ENCODE measurements at regions of chr22 and their contacts with region 1.

Region 1: DNA sequence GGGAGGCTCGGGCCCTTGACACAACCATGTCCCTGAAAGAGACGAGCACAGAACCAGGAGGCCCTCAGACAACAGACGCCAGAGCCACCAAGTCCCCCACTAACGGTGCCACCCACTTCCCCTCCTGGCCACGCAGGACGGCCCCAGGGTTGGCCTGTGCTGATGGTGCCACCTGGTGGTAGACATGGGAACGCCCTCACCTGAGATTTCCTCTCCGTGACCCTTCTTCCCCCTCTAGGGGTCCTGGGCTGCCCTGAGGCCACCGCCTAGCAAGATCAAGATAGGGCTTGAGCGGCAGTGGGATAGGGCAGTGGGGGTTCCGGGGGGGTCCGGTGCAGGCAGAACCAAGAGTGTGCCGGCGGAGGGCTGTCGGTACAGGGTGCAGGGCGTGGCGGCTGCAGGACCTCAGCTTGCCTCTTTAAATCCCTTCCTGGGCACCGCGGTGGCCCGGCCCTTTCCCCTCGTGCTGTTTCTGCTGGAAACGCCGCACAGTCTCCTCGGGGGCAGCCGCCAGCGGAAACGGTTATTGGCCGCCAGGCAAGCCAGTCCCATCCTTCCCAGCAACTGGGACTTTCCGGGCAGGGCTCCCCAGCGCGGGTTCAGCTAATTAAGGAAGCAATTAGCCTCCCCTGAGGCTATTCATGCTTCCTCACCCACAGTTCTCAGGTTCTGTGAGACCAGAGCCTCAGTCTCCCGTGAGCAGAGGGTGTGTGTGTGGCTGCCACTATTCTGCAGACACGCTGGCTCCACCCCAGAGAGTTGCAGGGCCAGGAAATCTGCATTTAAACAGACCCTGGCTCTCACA is 5.5 kb upstream of the NFAM1 start:
- DNase-seq: no peak
- H3K4me3 ChIP-seq: peak overlapping the region; percentile 43 to 44
- H3K27ac ChIP-seq: peak overlapping the region; percentile 69
- H3K4me1 ChIP-seq: peaks cover 36% of the 10 kb centered on the region
- H3K27me3 ChIP-seq: no peaks in the 10 kb centered on the region
- CTCF ChIP-seq: peak; percentile 97 to 99 (median 98)
- POLR2A ChIP-seq: no peak

Region 2: GRCh38 chr22:42090596-42091454 is 346.9 kb before region 1 on chr22 and contains the start of gene NDUFA6:
- intact Hi-C with region 1: loop called (anchors 5 kb)
- DNase-seq: peak; percentile 99
- H3K4me3 ChIP-seq: peak within 1 kb of the TSS; percentile 88 to 90
- H3K27ac ChIP-seq: peak within 1 kb of the TSS; percentile 95
- H3K4me1 ChIP-seq: peaks cover 33% of the 10 kb centered on the region
- H3K27me3 ChIP-seq: no peaks in the 10 kb centered on the region
- CTCF ChIP-seq: peak; percentile 78 to 97 (median 96)
- POLR2A ChIP-seq: peak in 1 of 2 donors; percentile 73
- total RNA-seq, gene NDUFA6: 42.0 TPM

Region 3: DNA sequence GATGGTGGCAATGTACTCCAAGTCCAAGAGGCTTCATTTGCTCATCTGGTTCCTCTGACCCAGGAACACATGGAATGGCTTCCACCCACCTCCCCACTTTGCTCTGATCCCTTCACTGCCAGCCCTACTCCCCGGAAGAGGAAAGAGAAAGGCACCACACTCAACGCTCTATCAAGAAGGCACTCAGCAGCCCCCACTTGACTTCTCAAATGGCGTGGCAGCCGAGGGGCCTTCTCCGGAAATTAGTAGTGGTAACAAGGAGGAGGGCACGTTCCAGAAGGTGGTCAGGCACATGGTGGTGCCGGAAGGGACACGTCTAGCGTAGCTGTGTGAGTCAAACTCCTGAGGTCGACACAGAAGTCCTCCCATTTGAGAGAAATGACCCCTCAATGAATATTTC is 270.6 kb before region 1 on chr22:
- intact Hi-C with region 1: loop called (anchors 2 kb)
- DNase-seq: no peak
- H3K4me3 ChIP-seq: no peak overlapping the region
- H3K27ac ChIP-seq: no peak overlapping the region
- H3K4me1 ChIP-seq: peaks cover 24% of the 10 kb centered on the region
- H3K27me3 ChIP-seq: no peaks in the 10 kb centered on the region
- CTCF ChIP-seq: no peak
- POLR2A ChIP-seq: no peak

Region 4: DNA sequence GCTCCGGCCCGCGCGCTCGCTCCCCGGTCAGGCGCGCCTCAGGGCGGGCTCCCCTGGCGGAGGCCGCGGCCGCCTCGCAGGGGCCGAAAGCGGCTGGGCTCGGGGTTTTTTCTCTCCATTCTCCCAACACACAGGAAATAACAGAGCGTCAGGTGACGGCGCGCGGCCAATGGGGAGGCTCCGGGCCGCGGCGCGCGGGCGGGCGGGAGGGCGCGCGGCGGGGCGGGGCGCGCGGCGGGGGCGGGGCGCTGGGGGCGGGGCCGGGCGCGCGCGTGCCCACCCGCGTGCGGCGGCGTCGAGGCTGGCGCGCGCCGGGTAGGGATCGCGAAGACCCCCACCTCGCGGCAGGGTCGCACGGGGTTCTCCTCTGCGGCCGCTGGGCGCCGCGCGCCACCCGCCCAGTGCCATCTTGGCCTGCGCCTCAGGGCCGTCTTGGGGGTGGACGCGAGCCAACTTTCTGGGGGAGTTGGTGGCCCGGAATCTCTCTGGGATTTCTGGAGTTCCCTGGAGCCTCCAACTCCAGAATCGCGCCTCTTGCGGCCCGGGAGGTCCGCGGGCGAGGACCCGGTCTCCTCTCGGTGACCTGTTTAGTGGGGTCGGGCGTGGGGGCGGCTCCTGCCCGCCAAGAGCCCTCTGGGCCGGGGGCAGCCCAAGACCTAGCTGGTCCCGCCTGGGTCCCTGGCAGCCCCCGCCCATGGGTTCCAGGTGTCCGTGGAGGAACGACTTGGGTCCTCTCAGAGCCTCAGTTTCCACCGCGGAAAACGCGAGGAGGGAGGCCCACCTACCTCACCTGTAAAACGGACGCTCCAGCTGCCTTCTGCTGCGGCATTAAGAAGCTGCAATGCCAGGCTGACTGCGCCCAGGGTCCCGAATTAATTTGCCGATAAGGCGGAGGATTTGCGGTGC is 166.9 kb before region 1 on chr22 and contains the start of gene TCF20:
- intact Hi-C with region 1: loop called (anchors 10 kb)
- DNase-seq: peak in 1 of 2 donors; percentile 72
- H3K4me3 ChIP-seq: peak within 1 kb of the TSS; percentile 95 to 100
- H3K27ac ChIP-seq: peak within 1 kb of the TSS; percentile 95
- H3K4me1 ChIP-seq: peaks cover 47% of the 10 kb centered on the region
- H3K27me3 ChIP-seq: no peaks in the 10 kb centered on the region
- CTCF ChIP-seq: no peak
- POLR2A ChIP-seq: no peak
- total RNA-seq, gene TCF20: 30.4 TPM

Measured in vagina (tissue), 2 donors.